A673 (cell line): ENCODE measurements at regions of chr10 and their contacts with region 1.

Region 1: DNA sequence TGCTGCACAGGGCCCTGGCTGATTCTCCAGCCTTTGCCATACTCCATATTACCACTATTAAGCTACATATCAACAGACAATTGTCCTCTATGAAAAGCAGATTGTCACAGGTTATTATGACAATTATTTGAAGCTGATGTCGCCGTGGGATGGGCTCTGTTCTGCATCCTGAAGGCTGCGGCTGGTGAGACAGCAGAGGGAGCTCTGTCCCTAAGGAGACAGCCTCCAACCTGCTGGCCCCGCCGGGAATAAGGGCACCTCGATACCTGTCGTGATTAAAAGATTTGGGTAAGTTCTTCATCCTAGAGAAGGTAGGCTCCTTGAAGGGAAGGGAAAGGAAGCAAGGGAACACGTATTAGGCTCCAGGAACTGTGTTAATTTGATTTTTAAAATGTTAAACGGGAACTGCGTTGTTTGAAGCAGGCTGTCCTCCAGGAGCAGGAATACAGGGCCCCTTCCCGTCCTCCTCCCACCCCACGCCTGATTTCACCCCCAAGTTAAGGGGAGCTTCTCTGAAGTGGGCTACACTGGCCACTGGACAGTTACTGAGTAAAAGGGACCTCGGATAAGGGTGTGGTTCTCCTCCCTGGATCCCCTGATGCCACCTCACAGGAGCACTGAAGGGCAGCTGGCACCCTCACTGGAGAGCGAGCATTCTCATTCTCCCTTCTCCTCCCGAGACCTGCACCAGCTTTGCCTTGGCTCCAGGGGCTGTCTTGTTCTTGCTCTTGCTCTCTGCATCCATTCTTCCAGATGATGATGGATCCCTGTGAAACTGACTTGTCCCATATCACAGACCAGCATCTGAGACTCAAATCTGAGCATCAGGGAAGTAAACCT is 11.8 kb upstream of the TIAL1 start:
- DNase-seq: peak; percentile 45
- H3K4me3 ChIP-seq: no peak overlapping the region
- H3K27ac ChIP-seq: no peak overlapping the region
- H3K4me1 ChIP-seq: no peaks in the 10 kb centered on the region
- H3K27me3 ChIP-seq: no peaks in the 10 kb centered on the region
- CTCF ChIP-seq: peak; percentile 82

Region 2: GRCh38 chr10:119567978-119568377 is 40.6 kb before region 1 on chr10:
- CTCF ChIA-PET with region 1: no interaction called
- POLR2A ChIA-PET with region 1: no interaction called
- intact Hi-C with region 1: no loop called
- DNase-seq: no peak
- H3K4me3 ChIP-seq: no peak overlapping the region
- H3K27ac ChIP-seq: no peak overlapping the region
- H3K4me1 ChIP-seq: no peaks in the 10 kb centered on the region
- H3K27me3 ChIP-seq: no peaks in the 10 kb centered on the region
- CTCF ChIP-seq: no peak

Region 3: GRCh38 chr10:119667562-119668328 is 59.2 kb after region 1 on chr10:
- CTCF ChIA-PET with region 1: no interaction called
- POLR2A ChIA-PET with region 1: no interaction called
- intact Hi-C with region 1: no loop called
- DNase-seq: peak; percentile 67
- H3K4me3 ChIP-seq: no peak overlapping the region
- H3K27ac ChIP-seq: peak overlapping the region; percentile 39
- H3K4me1 ChIP-seq: peaks cover 34% of the 10 kb centered on the region
- H3K27me3 ChIP-seq: no peaks in the 10 kb centered on the region
- CTCF ChIP-seq: no peak

Region 4: DNA sequence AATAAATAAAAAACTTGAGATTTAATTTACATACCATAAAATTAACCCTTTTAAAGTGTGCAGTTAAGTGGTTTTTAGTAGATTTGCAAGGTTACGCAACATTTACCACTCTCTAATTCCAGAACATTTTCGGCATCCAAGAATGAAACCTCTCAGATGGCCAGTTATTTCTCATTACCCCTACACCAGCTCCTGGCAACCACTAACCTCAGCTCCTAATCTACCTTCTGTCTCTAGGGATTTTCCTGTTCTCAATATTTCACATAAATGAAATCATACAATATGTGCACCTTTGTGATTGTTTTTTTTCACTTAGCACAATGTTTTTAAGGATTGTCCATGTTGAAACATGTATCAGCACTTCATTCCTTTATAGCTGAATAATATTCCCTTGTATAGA is 162.4 kb after region 1 on chr10:
- CTCF ChIA-PET with region 1: no interaction called
- POLR2A ChIA-PET with region 1: no interaction called
- intact Hi-C with region 1: no loop called
- DNase-seq: no peak
- H3K4me3 ChIP-seq: no peak overlapping the region
- H3K27ac ChIP-seq: no peak overlapping the region
- H3K4me1 ChIP-seq: peaks cover 28% of the 10 kb centered on the region
- H3K27me3 ChIP-seq: no peaks in the 10 kb centered on the region
- CTCF ChIP-seq: no peak

Region 5: DNA sequence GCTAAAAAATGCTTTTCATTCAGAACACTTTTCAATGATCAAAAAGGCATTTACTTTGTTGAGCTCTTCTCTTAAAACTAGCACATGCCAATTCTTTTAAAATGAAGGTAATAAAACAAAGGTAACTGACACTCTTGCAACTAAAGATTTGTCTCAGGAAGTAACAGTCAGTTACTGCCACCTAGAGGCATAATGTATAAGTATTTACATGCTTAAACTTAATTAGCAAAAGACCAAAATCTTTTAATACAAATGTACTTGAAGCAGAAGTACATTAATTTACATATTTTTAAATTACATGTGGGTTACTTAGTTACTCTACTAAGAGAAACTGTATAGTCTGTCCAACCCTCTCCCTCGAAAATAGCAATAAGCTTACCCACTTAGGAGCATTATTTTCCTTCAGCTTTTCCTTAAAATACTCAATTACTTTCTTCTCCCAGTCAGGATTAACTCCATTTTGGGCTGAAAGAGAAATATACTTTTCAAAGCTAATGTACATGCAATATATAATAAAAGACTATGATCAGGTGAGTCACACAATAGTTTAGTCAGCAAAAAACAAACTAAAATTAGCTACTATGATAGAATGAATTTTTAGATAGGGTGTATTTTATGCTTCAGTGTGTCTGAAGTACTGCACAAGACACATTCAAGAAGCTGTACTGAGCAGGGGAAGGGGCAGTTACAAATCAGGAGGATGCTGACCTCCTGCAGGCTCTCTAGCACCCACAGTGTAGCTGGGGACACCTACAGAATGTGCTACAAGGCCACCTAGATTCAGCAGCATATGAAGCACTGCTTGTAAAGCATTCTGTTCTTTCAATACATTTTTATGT is 251.1 kb after region 1 on chr10:
- CTCF ChIA-PET with region 1: no interaction called
- POLR2A ChIA-PET with region 1: no interaction called
- intact Hi-C with region 1: loop called (anchors 5 kb)
- DNase-seq: peak; percentile 53
- H3K4me3 ChIP-seq: no peak overlapping the region
- H3K27ac ChIP-seq: no peak overlapping the region
- H3K4me1 ChIP-seq: peaks cover 11% of the 10 kb centered on the region
- H3K27me3 ChIP-seq: no peaks in the 10 kb centered on the region
- CTCF ChIP-seq: peak; percentile 72

Region 6: GRCh38 chr10:120095875-120096274 is 487.3 kb after region 1 on chr10:
- CTCF ChIA-PET with region 1: no interaction called
- POLR2A ChIA-PET with region 1: no interaction called
- intact Hi-C with region 1: no loop called
- DNase-seq: no peak
- H3K4me3 ChIP-seq: no peak overlapping the region
- H3K27ac ChIP-seq: no peak overlapping the region
- H3K4me1 ChIP-seq: no peaks in the 10 kb centered on the region
- H3K27me3 ChIP-seq: peaks cover 26% of the 10 kb centered on the region
- CTCF ChIP-seq: no peak